Spleen (tissue), 13 donors: ENCODE measurements at regions of chr1 and their contacts with region 1.

Region 1: GRCh38 chr1:160768295-160768657 is 27.7 kb upstream of the LY9 start:
- DNase-seq: peak; percentile 91
- H3K4me3 ChIP-seq: peak overlapping the region in 2 of 8 donors; percentile 30 to 57
- H3K27ac ChIP-seq: peak overlapping the region; percentile 8 to 87 (median 76)
- H3K4me1 ChIP-seq: peaks cover 0 to 26% (median 16%) of the 10 kb centered on the region in 6 donors
- H3K27me3 ChIP-seq: no peaks in the 10 kb centered on the region
- CTCF ChIP-seq: peak; percentile 48 to 79 (median 76)
- POLR2A ChIP-seq: no peak

Region 2: GRCh38 chr1:160681067-160681890 is 87.0 kb before region 1 on chr1:
- intact Hi-C with region 1: loop called (anchors 5 kb)
- DNase-seq: peak; percentile 94
- H3K4me3 ChIP-seq: no peak overlapping the region
- H3K27ac ChIP-seq: peak overlapping the region in 4 of 8 donors; percentile 72 to 83 (median 81)
- H3K4me1 ChIP-seq: peaks cover 29 to 71% (median 53%) of the 10 kb centered on the region in 6 donors
- H3K27me3 ChIP-seq: no peaks in the 10 kb centered on the region
- CTCF ChIP-seq: peak; percentile 66 to 92 (median 85)
- POLR2A ChIP-seq: no peak